HEK293 (cell line): ENCODE measurements at regions of chr19 and their contacts with region 1.

Region 1: DNA sequence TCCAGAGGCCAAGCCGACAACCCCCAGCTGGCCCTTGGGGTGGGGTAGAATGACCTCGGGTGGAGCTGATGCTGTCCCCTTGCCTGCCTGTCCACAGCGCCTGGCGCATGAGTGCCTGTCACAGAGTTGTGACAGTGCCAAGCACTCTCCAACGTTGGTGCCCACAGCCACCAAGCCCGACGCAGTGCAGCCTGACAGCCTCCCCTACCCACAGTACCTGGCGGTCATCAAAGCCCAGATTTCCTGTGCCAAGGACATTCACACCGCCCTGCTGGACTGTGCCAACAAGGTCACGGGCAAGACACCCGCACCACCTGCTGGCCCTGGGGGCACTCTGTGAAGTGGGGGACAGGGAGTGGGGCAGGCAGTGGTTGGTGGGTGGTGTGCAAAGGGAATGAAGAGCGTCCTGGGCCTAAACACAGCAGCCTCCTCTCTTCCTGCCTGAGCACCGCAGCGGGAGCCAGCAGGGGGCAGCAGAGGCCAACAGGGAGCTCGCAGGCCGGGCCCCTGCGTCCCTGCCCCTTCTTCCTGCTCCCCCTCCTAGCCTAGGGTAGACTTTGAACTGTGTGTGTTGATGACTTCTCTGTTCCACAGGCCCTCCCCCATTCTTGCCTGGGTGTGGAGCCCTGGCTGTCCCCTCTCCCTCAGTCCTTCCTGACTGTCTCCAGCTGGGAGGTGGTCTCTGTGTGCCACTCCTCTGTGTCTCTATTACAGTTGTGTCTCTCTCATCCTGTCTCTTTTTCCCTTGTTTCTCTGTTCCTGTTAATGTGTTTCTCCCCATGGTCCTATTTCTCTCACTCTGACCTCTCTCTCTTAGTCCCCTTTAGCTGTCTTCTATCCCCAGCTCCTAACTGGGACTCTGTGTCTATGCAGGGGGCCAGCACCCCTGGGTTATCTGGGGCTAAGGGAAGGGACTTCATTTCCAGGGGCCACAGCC is 6.5 kb downstream of the MED29 start:
- H3K4me3 ChIP-seq: no peak overlapping the region
- H3K27ac ChIP-seq: peak overlapping the region; percentile 3; the same call in 1 of the 2 replicates
- H3K4me1 ChIP-seq: peaks cover 10% of the 10 kb centered on the region
- CTCF ChIP-seq: peak; percentile 100

Region 2: GRCh38 chr19:39212375-39212742 is 185.3 kb before region 1 on chr19:
- CTCF ChIA-PET with region 1: interaction called, 13 read pairs
- POLR2A ChIA-PET with region 1: no interaction called
- H3K4me3 ChIP-seq: no peak overlapping the region
- H3K27ac ChIP-seq: no peak overlapping the region
- H3K4me1 ChIP-seq: no peaks in the 10 kb centered on the region
- CTCF ChIP-seq: peak; percentile 76

Region 3: GRCh38 chr19:39347332-39348164 is 50.1 kb before region 1 on chr19:
- CTCF ChIA-PET with region 1: interaction called, 10 read pairs
- POLR2A ChIA-PET with region 1: interaction called, 5 read pairs
- H3K4me3 ChIP-seq: no peak overlapping the region
- H3K27ac ChIP-seq: peak overlapping the region; percentile 26
- H3K4me1 ChIP-seq: peaks cover 48% of the 10 kb centered on the region
- CTCF ChIP-seq: no peak

Region 4: GRCh38 chr19:39381910-39382611 is 15.6 kb before region 1 on chr19:
- CTCF ChIA-PET with region 1: interaction called, 22 read pairs
- POLR2A ChIA-PET with region 1: interaction called, 3 read pairs
- H3K4me3 ChIP-seq: no peak overlapping the region
- H3K27ac ChIP-seq: peak overlapping the region; percentile 52; the same call in 1 of the 2 replicates
- H3K4me1 ChIP-seq: peaks cover 6% of the 10 kb centered on the region
- CTCF ChIP-seq: no peak

Region 5: GRCh38 chr19:39532233-39533002 is 134.8 kb after region 1 on chr19 and contains the start of gene EID2B:
- CTCF ChIA-PET with region 1: interaction called, 11 read pairs
- POLR2A ChIA-PET with region 1: no interaction called
- H3K4me3 ChIP-seq: peak within 1 kb of the TSS; percentile 88
- H3K27ac ChIP-seq: peak within 1 kb of the TSS; percentile 85
- H3K4me1 ChIP-seq: peaks cover 20% of the 10 kb centered on the region
- CTCF ChIP-seq: peak; percentile 100